K562 (cell line): ENCODE measurements at regions of chr11 and their contacts with region 1.

Region 1: DNA sequence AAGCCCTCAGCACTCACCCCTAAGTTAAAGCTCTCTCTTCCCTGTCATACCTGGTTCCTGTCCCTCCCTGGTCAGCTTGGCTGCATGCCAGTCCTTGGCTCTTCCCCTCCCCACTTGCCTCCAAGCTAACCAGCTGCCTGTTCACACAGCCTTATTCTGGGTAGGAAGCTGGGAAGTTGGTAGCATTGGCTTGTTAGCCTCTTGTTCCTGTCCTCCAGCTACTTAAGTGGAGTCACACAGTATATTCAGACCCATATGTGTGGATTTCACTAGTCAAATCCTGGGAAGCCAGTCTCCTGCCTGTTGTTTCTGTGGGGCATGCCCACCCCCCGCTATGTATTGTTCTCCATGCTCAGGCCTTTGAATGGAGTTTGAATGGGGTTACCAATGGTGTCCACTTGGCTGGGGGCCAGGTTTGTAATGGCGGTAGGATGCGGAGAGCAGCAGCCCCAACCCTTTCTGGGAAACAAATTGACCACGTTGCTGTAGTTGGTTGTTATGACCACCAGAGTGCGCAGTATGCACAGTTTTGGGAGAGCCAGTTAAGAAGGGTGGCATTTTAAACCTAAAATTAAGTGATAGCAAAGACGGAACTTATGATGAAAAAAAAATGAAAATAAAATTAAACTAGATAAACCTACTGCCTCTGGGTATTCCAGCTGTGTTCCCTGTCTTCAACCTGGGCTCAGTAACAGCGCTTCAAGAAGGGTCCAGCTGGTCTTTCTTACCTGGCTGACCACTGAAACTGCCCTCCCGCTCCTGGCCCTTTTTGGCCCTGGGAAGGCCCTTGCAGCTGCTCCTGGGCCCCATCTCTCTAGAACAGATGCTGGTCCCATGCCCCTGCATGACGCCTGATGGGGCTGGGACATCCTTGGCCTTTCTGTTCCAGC is 10.7 kb upstream of the RPS3 start:
- DNase-seq: peak; percentile 76 to 90 (median 80)
- ATAC-seq: peak; percentile 86
- H3K4me3 ChIP-seq: no peak overlapping the region
- H3K27ac ChIP-seq: peak overlapping the region; percentile 37; the same call in 1 of the 3 replicates
- H3K4me1 ChIP-seq: peaks cover 15% of the 10 kb centered on the region in 2 experiments
- H3K27me3 ChIP-seq: no peaks in the 10 kb centered on the region
- CTCF ChIP-seq: peak; percentile 81 to 94 (median 89)
- EP300 ChIP-seq: no peak
- POLR2A ChIP-seq: no peak
- RAD21 ChIP-seq: peak; percentile 92 to 94

Region 2: GRCh38 chr11:75280227-75280701 is 108.4 kb before region 1 on chr11:
- CTCF ChIA-PET with region 1: interaction called, 49 read pairs
- POLR2A ChIA-PET with region 1: interaction called, 4 read pairs
- in situ Hi-C with region 1: loop called (anchors 5 kb)
- intact Hi-C with region 1: loop called (anchors 1 kb)
- DNase-seq: peak; percentile 80 to 85 (median 84)
- ATAC-seq: peak; percentile 97
- H3K4me3 ChIP-seq: no peak overlapping the region
- H3K27ac ChIP-seq: no peak overlapping the region
- H3K4me1 ChIP-seq: peaks cover 0 to 7% of the 10 kb centered on the region in 2 experiments; a peak in 1 of 5 replicates
- H3K27me3 ChIP-seq: no peaks in the 10 kb centered on the region
- CTCF ChIP-seq: peak; percentile 88 to 94 (median 90)
- EP300 ChIP-seq: no peak
- POLR2A ChIP-seq: no peak
- RAD21 ChIP-seq: peak; percentile 83 to 95

Region 3: GRCh38 chr11:75351791-75352587 is 36.6 kb before region 1 on chr11:
- CTCF ChIA-PET with region 1: interaction called, 4 read pairs
- POLR2A ChIA-PET with region 1: no interaction called
- in situ Hi-C with region 1: no loop called
- intact Hi-C with region 1: loop called (anchors 1 kb)
- DNase-seq: peak; percentile 83 to 93 (median 88)
- ATAC-seq: peak; percentile 85
- H3K4me3 ChIP-seq: peak overlapping the region; percentile 69
- H3K27ac ChIP-seq: peak overlapping the region; percentile 81
- H3K4me1 ChIP-seq: peaks cover 43 to 49% of the 10 kb centered on the region in 2 experiments
- H3K27me3 ChIP-seq: no peaks in the 10 kb centered on the region
- CTCF ChIP-seq: peak; percentile 62 to 75 (median 68); a peak in 5 of 6 replicates
- EP300 ChIP-seq: peak; percentile 36; the same call in 1 of the 2 replicates
- POLR2A ChIP-seq: peak; percentile 73; the same call in 1 of the 2 replicates
- RAD21 ChIP-seq: peak; percentile 50 to 69

Region 4: GRCh38 chr11:75445315-75445953 is 56.8 kb after region 1 on chr11:
- CTCF ChIA-PET with region 1: interaction called, 10 read pairs
- POLR2A ChIA-PET with region 1: no interaction called
- in situ Hi-C with region 1: no loop called
- intact Hi-C with region 1: loop called (anchors 2 kb)
- DNase-seq: peak; percentile 80 to 86 (median 84)
- ATAC-seq: peak; percentile 93
- H3K4me3 ChIP-seq: no peak overlapping the region
- H3K27ac ChIP-seq: no peak overlapping the region
- H3K4me1 ChIP-seq: peaks cover 0 to 17% of the 10 kb centered on the region in 2 experiments; a peak in 1 of 5 replicates
- H3K27me3 ChIP-seq: no peaks in the 10 kb centered on the region
- CTCF ChIP-seq: peak; percentile 91 to 99 (median 95)
- EP300 ChIP-seq: no peak
- POLR2A ChIP-seq: no peak
- RAD21 ChIP-seq: peak; percentile 98 to 99

Region 5: GRCh38 chr11:75873417-75874221 is 485.0 kb after region 1 on chr11:
- CTCF ChIA-PET with region 1: no interaction called
- POLR2A ChIA-PET with region 1: no interaction called
- in situ Hi-C with region 1: no loop called
- intact Hi-C with region 1: loop called (anchors 5 kb)
- DNase-seq: no peak
- ATAC-seq: no peak
- H3K4me3 ChIP-seq: no peak overlapping the region
- H3K27ac ChIP-seq: no peak overlapping the region
- H3K4me1 ChIP-seq: peaks cover 2 to 6% of the 10 kb centered on the region in 2 experiments; a peak in 3 of 5 replicates
- H3K27me3 ChIP-seq: no peaks in the 10 kb centered on the region
- CTCF ChIP-seq: no peak
- EP300 ChIP-seq: no peak
- POLR2A ChIP-seq: no peak
- RAD21 ChIP-seq: no peak